ENCODE measurements at regions of chr3 and their contacts with region 1.

Region 1: DNA sequence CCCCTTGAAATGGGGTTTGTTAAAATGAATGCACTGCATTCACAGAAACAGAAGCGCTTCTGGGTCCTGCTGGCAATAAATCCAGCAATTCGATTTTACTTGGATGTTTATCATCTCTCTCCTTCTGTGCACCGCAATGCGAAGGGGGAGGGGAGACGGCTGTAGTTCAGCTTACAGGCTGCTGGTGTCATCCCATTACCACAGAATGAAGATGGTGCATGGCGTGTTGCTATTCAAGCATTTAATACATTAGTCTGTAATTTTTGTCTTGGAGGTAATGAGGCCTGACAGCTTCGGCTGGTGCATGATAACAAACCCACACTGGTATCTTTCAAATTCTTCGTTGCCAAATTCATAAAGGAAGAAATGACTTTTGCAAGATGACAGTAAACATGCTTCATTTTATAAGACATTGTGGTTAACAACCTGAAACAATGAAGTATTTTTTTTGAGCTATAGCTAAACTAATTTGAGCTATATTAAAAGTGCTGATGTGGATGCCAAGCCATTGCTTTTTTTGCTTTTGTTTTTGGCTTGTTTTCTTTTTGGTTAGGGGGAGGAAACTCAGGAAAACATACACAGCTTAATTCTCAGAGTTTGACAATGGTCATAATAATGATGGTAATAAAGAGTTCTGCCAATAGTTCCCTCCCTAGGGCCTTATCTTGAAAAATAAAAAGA is 418.3 kb downstream of the OTOL1 start:
- DNase-seq: peak; percentile 90
- H3K4me3 ChIP-seq: no peak overlapping the region
- H3K27ac ChIP-seq: peak overlapping the region; percentile 51
- H3K4me1 ChIP-seq: peaks cover 25% of the 10 kb centered on the region
- H3K27me3 ChIP-seq: no peaks in the 10 kb centered on the region
- CTCF ChIP-seq: peak; percentile 88

Region 2: DNA sequence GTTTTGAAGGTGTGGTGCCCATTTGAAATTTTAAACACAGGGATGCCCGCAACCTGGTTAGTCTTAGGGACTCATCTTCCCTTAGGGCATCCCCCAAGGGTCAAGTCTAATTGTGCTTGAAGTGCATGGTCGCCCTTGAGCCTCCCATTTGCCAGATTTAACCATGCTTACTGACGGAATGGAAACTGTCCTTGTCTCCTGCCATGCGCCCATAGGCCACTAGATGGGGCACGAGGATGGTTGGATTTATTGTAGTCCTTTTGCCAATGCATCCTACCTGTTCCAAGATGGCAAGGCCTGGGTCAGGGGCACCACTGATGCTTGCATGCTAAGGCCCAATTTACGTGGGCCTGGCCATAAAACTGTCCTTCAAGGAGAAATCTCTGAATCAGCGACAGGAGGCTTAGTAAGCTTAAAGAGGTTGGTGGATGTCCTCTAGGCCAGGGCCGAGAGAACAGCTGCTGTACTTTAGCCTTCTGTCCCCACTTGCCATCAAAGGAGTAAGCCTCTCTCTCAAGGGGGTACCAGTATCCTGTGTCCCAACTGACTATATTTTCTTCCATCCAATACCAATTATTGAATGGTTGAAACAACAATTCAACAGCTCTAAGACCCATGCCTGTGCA is 62.8 kb before region 1 on chr3:
- CTCF ChIA-PET with region 1: no interaction called
- POLR2A ChIA-PET with region 1: no interaction called
- intact Hi-C with region 1: loop called (anchors 5 kb)
- DNase-seq: peak; percentile 70
- H3K4me3 ChIP-seq: no peak overlapping the region
- H3K27ac ChIP-seq: no peak overlapping the region
- H3K4me1 ChIP-seq: peaks cover 8% of the 10 kb centered on the region
- H3K27me3 ChIP-seq: no peaks in the 10 kb centered on the region
- CTCF ChIP-seq: peak; percentile 84

Region 3: DNA sequence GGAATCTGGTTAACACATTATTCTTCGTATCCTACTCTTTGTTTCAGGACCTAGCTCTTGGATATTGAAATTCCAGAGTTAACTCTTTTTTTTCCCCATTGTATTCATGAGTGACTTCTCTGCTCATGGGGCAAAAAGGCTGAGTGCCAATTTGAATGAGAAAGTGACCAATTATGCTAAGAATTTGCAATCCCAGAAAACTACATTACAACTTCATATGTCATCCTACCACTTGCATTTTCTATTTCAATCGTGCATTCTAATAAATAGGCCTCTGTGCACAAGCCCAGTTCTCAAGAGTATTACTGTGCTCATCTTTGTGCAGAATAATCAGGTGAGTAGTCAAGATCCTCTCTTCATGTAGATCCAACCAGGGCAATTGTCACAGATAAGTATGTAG is 119.5 kb after region 1 on chr3:
- CTCF ChIA-PET with region 1: no interaction called
- POLR2A ChIA-PET with region 1: no interaction called
- intact Hi-C with region 1: no loop called
- DNase-seq: no peak
- H3K4me3 ChIP-seq: no peak overlapping the region
- H3K27ac ChIP-seq: no peak overlapping the region
- H3K4me1 ChIP-seq: no peaks in the 10 kb centered on the region
- H3K27me3 ChIP-seq: no peaks in the 10 kb centered on the region
- CTCF ChIP-seq: no peak

Region 4: DNA sequence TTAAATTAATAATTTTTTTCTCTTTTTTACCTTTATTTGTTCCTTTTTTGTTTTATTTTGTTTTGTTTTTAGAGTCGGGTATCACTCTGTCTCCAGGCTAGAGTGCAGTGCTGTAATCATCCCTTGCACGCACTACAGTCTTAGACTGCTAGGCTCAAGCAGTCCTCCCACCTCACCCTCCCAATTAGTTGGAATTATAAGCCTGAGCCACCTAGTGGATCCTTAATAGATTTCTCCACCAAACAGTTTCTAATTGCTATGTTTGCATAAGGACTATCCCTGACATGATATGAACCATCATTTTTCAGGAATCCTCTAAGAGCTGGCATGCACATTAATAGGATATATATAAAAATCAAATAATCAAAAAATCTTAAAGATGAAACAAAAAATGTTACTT is 575.0 kb after region 1 on chr3:
- CTCF ChIA-PET with region 1: no interaction called
- POLR2A ChIA-PET with region 1: no interaction called
- intact Hi-C with region 1: loop called (anchors 10 kb)
- DNase-seq: peak; percentile 69
- H3K4me3 ChIP-seq: no peak overlapping the region
- H3K27ac ChIP-seq: no peak overlapping the region
- H3K4me1 ChIP-seq: peaks cover 14% of the 10 kb centered on the region
- H3K27me3 ChIP-seq: no peaks in the 10 kb centered on the region
- CTCF ChIP-seq: peak; percentile 57

Region 5: GRCh38 chr3:163185721-163186350 is 1271.0 kb after region 1 on chr3:
- CTCF ChIA-PET with region 1: no interaction called
- POLR2A ChIA-PET with region 1: no interaction called
- intact Hi-C with region 1: loop called (anchors 2 kb)
- DNase-seq: peak; percentile 92
- H3K4me3 ChIP-seq: no peak overlapping the region
- H3K27ac ChIP-seq: peak overlapping the region; percentile 99
- H3K4me1 ChIP-seq: peaks cover 22% of the 10 kb centered on the region
- H3K27me3 ChIP-seq: no peaks in the 10 kb centered on the region
- CTCF ChIP-seq: no peak

Region 6: DNA sequence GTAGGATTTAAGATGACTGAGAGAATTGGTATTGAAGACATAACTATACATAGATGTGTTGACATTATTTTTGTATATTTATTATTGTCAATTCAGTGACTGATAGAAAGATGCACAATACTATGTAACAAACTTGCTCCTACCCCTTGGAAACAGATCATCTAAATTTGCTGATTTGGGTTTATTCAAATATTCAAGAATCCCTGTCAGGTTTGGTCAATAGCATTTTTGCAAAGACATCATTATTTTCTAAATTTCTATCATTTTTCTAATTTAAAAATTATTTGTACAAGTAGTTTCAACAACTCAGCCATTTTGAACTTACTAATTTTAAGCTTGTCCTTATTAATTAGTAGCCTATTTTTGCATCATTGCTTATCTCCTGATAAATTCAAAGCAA is 1700.0 kb after region 1 on chr3:
- CTCF ChIA-PET with region 1: no interaction called
- POLR2A ChIA-PET with region 1: no interaction called
- intact Hi-C with region 1: loop called (anchors 10 kb)
- DNase-seq: no peak
- H3K4me3 ChIP-seq: no peak overlapping the region
- H3K27ac ChIP-seq: peak overlapping the region; percentile 99
- H3K4me1 ChIP-seq: peaks cover 28% of the 10 kb centered on the region
- H3K27me3 ChIP-seq: no peaks in the 10 kb centered on the region
- CTCF ChIP-seq: no peak

Measured in A673 (cell line).